Right ventricle myocardium superior (tissue), 1 donor: ENCODE measurements at regions of chr17 and their contacts with region 1.

Region 1: DNA sequence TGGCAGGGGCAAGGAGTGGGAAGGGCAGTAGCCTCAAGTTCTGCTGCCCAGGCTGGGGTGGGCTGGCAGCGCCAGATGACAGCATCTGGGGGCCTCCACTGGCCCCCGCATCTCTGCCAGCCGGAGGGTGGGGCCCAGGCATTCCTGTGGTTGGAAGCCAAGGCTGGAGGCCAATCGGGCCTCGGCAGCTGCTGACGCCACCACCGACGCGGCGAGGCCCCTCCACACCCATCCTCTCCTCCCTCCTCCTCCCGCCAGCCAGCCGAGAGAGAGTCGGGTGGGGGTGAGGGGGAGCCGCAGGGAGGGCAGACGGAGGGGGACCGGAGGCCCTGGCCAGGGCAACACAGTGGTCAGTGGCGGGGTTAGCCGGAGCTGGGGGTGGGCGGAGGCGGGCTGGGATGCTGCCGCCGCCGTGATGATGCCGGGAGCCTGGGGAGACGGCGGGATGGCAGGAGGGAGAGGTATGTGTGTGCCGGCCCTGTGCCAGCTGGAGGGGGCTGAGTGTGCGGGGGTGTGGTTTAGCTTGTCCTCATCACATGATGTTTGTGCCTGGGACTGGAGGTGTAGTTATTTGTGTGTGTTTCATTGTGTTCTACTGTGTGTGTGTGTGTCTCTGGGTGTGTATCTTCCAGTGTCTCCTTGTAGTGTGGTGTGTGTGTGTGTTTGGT is 36.6 kb downstream of the ARHGAP23 start:
- DNase-seq: peak; percentile 90
- ATAC-seq: peak; percentile 82

Region 2: DNA sequence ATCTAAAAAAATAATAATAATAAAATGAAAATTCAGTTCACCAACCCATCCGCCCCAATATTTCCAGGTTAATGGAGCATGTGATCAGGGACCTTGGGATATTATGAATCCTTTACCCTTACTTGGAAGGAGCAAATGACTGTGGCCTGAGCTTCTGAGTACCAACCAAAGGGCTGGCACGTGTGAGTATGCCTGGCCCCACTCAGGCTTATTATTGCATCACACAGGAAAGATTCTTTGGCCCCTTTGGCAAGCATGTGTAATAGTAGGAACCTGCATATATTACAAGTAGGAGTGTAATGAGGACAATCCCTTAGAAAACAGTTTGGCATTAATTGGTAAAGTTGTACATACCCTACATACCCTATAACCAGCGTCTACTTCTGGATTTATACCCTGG is 1096.3 kb before region 1 on chr17:
- intact Hi-C with region 1: no loop called
- DNase-seq: no peak
- ATAC-seq: no peak

Region 3: DNA sequence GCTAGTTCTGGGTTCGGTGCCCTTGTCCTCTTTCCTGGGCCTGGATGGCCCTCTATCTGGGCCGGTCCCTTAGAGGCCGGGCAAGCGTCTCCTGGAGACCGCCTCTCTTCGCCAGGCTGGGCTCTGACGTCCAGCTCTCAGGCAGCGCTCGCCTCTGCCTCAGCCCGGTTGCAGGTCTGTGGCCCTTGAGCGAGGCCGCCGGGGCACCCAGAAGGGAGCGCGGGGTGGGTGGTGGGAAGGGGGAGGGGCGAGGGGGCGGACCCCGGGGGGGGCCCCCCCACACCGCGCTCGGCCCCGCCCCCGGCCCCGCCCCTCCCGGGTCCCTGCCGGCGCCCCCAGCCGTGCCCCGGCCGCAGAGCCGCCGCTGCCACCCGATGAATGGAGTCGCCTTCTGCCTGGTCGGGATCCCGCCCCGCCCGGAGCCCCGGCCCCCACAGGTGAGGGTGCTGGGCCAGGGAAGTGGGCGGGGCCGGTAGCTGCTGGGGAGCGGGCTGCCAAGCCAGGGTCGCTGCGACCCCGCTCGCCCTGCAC is 36.7 kb before region 1 on chr17 and contains the start of gene ARHGAP23:
- intact Hi-C with region 1: loop called (anchors 5 kb)
- DNase-seq: peak; percentile 83
- ATAC-seq: peak; percentile 81
- total RNA-seq, gene ARHGAP23: 58.3 TPM